ENCODE measurements at regions of chr11 and their contacts with region 1.

Region 1: GRCh38 chr11:64317957-64318693 is at the start of gene PRDX5:
- DNase-seq: peak; percentile 95 to 99
- ATAC-seq: peak; percentile 74 to 90 (median 78)
- H3K4me3 ChIP-seq: peak within 1 kb of the TSS; percentile 91
- H3K4me3 Mint-ChIP-seq: peak within 1 kb of the TSS; percentile 97
- H3K27ac ChIP-seq: peak within 1 kb of the TSS; percentile 86
- H3K27ac Mint-ChIP-seq: peak within 1 kb of the TSS; percentile 88 to 99
- H3K4me1 ChIP-seq: peaks cover 30% of the 10 kb centered on the region
- H3K4me1 Mint-ChIP-seq: peaks cover 47 to 54% of the 10 kb centered on the region in 2 donors
- H3K27me3 ChIP-seq: no peaks in the 10 kb centered on the region
- H3K27me3 Mint-ChIP-seq: no peaks in the 10 kb centered on the region
- CTCF ChIP-seq: no peak
- total RNA-seq, gene PRDX5: 85.9 to 104 (median 88.8) TPM

Region 2: DNA sequence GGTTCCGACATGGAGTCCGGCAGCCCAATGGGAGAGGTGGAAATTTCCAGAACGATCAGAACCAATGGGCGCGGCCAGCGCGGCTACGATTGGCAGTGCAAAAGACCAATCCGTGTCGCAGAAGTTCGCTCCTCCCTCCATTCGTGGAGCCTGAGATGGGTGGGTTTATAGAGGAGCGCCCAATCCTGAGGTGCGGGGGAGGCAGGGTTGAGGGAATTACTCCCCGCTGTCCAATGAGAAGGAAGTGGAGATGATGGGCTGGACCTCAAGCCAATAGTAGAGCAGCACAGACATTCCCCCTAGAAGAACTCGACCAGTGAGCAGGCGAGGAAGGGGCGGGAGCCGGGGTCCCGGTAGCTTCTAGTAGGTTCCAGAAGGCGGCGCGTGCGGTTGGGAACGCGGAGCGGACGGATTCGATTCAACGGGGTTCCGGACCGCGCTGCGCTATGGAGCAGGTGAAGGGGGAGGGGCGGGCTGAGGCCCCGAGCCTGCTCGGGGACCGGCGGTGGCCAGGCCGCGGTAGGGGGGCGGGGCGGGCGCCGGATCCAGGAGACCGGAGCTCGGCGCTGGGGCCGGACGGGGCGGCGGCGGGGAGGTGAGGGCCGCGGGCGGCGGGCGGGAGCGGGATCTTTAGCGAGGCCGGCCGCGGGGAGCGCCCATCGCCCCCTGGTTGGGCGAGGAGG is 132.2 kb before region 1 on chr11 and contains the start of gene STIP1:
- intact Hi-C with region 1: loop called (anchors 5 kb)
- DNase-seq: peak; percentile 96 to 100
- ATAC-seq: peak; percentile 85 to 95 (median 86)
- H3K4me3 ChIP-seq: peak within 1 kb of the TSS; percentile 60
- H3K4me3 Mint-ChIP-seq: peak within 1 kb of the TSS; percentile 98
- H3K27ac ChIP-seq: peak within 1 kb of the TSS; percentile 66
- H3K27ac Mint-ChIP-seq: no peak within 1 kb of the TSS
- H3K4me1 ChIP-seq: peaks cover 20% of the 10 kb centered on the region
- H3K4me1 Mint-ChIP-seq: peaks cover 6 to 31% of the 10 kb centered on the region in 2 donors
- H3K27me3 ChIP-seq: no peaks in the 10 kb centered on the region
- H3K27me3 Mint-ChIP-seq: no peaks in the 10 kb centered on the region
- CTCF ChIP-seq: no peak
- total RNA-seq, gene STIP1: 80.9 to 110 (median 85.1) TPM

Region 3: DNA sequence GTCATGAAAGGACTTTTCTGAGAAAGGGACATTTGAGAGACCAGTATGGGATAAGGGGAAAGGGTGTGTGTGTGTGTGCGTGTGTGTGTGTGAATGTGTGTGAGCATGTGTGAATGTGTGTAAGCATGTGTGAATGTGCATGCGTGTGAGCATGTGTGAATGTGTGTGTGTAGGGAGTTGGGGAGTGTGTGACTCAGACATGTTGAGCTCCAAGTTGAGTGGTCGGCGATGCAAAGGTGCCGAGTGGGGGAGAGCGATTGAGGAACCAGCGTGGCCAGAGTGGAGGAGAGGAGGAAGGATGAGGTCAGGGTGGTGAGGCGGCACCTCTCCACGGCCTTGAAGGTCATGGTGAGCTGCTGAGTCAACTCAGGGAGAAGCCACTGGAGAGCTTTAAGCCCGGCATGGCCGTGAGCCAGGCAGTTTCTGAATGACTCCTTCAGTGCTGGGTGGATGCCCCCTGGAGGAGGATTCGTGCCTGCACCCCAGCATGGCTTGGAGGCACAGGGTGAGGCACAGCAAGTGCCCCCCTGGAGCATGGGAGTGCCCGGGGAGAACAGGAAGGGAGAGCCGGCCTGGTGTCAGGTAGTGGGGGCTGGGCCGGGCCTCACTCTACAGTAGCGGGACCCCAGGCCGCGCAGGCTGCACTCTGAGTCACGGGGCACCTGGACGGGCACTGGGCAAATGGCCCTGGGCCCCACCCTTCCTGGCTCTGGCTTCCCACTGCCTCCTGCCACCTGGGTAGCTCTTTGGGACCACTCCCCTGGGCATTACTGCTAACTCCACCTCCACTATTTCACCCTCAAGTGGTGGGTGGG is 13.6 kb after region 1 on chr11:
- intact Hi-C with region 1: loop called (anchors 1 kb)
- DNase-seq: peak; percentile 76 to 84
- ATAC-seq: peak; percentile 88 to 96 (median 92)
- H3K4me3 ChIP-seq: no peak overlapping the region
- H3K4me3 Mint-ChIP-seq: peak overlapping the region; percentile 76
- H3K27ac ChIP-seq: peak overlapping the region; percentile 49
- H3K27ac Mint-ChIP-seq: peak overlapping the region; percentile 81 to 82
- H3K4me1 ChIP-seq: peaks cover 40% of the 10 kb centered on the region
- H3K4me1 Mint-ChIP-seq: peaks cover 13 to 35% of the 10 kb centered on the region in 2 donors
- H3K27me3 ChIP-seq: no peaks in the 10 kb centered on the region
- H3K27me3 Mint-ChIP-seq: no peaks in the 10 kb centered on the region
- CTCF ChIP-seq: peak; percentile 75

Region 4: DNA sequence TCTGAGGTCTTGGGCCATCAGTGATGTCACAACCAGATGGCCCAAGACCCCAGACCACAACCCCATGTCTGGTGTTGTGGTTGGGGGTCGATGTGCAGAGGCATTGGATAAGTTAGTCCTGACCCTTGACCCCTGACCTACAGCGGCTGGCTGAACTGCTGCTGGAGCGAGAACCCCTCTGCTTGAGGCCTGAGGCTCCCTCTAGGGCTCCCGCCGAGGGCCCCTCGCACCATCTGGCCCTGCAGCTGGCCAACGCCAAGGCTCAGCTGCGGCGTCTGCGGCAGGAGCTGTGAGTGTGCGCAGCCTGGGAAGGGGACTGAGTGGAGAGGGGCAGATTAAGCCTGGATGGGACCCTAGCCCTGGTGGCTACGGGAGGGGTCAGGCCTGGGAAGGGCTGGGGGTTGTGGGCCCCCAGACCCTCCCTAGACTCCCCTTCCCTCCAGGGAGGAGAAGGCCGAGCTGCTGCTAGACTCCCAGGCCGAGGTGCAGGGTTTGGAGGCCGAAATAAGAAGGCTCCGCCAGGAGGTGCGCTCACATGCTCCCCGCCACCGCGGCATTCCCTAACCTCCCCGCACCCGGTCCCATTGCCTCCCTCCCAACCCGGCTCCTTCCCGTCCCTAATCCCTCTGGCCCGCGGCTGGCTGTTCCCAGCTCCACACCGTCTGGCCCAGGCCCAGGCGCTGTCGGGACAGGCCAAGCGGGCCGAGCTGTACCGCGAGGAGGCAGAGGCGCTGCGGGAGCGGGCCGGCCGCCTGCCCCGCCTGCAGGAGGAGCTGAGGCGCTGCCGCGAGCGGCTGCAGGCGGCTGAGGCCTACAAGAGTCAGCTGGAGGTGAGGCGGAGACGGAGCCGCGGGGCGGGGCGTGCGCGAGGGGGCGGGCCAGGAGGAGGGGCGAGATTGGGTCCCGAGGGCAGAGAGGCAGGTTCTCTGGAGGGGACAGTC is 24.0 kb after region 1 on chr11:
- intact Hi-C with region 1: loop called (anchors 1 kb)
- DNase-seq: peak; percentile 91
- ATAC-seq: peak; percentile 66 to 79 (median 67)
- H3K4me3 ChIP-seq: no peak overlapping the region
- H3K4me3 Mint-ChIP-seq: peak overlapping the region; percentile 95
- H3K27ac ChIP-seq: no peak overlapping the region
- H3K27ac Mint-ChIP-seq: peak overlapping the region; percentile 96 to 98
- H3K4me1 ChIP-seq: peaks cover 48% of the 10 kb centered on the region
- H3K4me1 Mint-ChIP-seq: peaks cover 33 to 61% of the 10 kb centered on the region in 2 donors
- H3K27me3 ChIP-seq: no peaks in the 10 kb centered on the region
- H3K27me3 Mint-ChIP-seq: no peaks in the 10 kb centered on the region
- CTCF ChIP-seq: peak; percentile 11

Region 5: GRCh38 chr11:64458997-64459396 is 140.9 kb after region 1 on chr11:
- intact Hi-C with region 1: no loop called
- DNase-seq: no peak
- ATAC-seq: no peak
- H3K4me3 ChIP-seq: no peak overlapping the region
- H3K4me3 Mint-ChIP-seq: no peak overlapping the region
- H3K27ac ChIP-seq: no peak overlapping the region
- H3K27ac Mint-ChIP-seq: no peak overlapping the region
- H3K4me1 ChIP-seq: no peaks in the 10 kb centered on the region
- H3K4me1 Mint-ChIP-seq: no peaks in the 10 kb centered on the region
- H3K27me3 ChIP-seq: no peaks in the 10 kb centered on the region
- H3K27me3 Mint-ChIP-seq: peaks cover 0 to 13% of the 10 kb centered on the region in 2 donors
- CTCF ChIP-seq: no peak

Measured in natural killer cell (primary cell).